Breast epithelium (tissue), 4 donors: ENCODE measurements at regions of chr16 and their contacts with region 1.

Region 1: GRCh38 chr16:84526794-84527503 is 22.5 kb upstream of the MEAK7 start:
- DNase-seq: peak in 1 of 2 donors; percentile 52
- H3K4me3 ChIP-seq: peak overlapping the region in 2 of 3 donors; percentile 25 to 51
- H3K27ac ChIP-seq: peak overlapping the region; percentile 58 to 60
- H3K4me1 ChIP-seq: peaks cover 0 to 10% of the 10 kb centered on the region in 2 donors
- H3K27me3 ChIP-seq: no peaks in the 10 kb centered on the region
- CTCF ChIP-seq: no peak
- POLR2A ChIP-seq: no peak

Region 2: DNA sequence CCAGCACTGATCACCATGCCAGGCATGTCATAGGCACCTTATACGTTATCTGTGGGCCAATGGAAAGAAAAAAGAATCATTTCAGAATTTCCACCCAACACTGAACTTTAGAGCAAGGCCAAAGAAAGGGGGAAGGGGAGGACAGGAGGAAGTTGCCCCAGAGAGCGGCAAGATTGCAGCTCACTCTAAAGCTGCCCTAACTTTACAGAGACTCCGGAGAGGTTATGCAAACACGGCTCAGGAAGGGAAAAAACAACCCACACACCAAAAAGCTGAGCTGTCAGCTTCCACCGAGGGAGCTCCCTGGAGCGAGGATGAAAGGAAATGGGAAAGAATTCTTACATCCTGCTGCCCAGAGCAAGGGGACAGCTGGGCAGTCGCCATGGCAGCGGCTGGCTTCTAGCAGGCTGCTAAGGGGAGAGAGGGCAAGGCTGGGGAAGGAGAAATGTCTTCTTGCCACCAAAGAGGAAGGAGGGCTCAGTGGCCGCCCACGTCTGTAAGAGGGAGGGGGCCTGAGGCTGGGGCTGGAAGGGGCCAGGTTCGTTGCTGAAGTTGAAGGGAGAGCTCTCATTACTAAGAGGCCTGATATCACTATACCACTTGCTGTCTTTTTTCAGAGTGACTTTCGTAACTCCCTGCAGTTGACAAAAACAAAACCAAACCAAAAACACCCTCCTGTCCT is 72.7 kb after region 1 on chr16:
- intact Hi-C with region 1: loop called (anchors 10 kb)
- DNase-seq: no peak
- H3K4me3 ChIP-seq: peak overlapping the region in 2 of 3 donors; percentile 32 to 54
- H3K27ac ChIP-seq: peak overlapping the region; percentile 75 to 92
- H3K4me1 ChIP-seq: peaks cover 0 to 7% of the 10 kb centered on the region in 2 donors
- H3K27me3 ChIP-seq: no peaks in the 10 kb centered on the region
- CTCF ChIP-seq: no peak
- POLR2A ChIP-seq: no peak